ENCODE measurements at regions of chr2 and their contacts with region 1.

Region 1: GRCh38 chr2:203240491-203240890 is 1.7 kb downstream of the CYP20A1 start:
- DNase-seq: no peak
- H3K4me3 ChIP-seq: peak overlapping the region in 2 of 4 donors; percentile 71 to 79
- H3K27ac ChIP-seq: no peak overlapping the region
- H3K4me1 ChIP-seq: peaks cover 21 to 32% (median 24%) of the 10 kb centered on the region in 4 donors
- H3K27me3 ChIP-seq: no peaks in the 10 kb centered on the region
- CTCF ChIP-seq: no peak
- EP300 ChIP-seq: no peak
- POLR2A ChIP-seq: no peak

Region 2: GRCh38 chr2:203453858-203454451 is 213.5 kb after region 1 on chr2:
- intact Hi-C with region 1: loop called (anchors 10 kb)
- DNase-seq: no peak
- H3K4me3 ChIP-seq: no peak overlapping the region
- H3K27ac ChIP-seq: no peak overlapping the region
- H3K4me1 ChIP-seq: peaks cover 0 to 4% (median 0%) of the 10 kb centered on the region in 4 donors
- H3K27me3 ChIP-seq: no peaks in the 10 kb centered on the region
- CTCF ChIP-seq: peak; percentile 67 to 75 (median 70)
- EP300 ChIP-seq: no peak
- POLR2A ChIP-seq: no peak

Region 3: GRCh38 chr2:203498161-203498560 is 257.7 kb after region 1 on chr2:
- intact Hi-C with region 1: no loop called
- DNase-seq: no peak
- H3K4me3 ChIP-seq: no peak overlapping the region
- H3K27ac ChIP-seq: no peak overlapping the region
- H3K4me1 ChIP-seq: peaks cover 5 to 25% (median 14%) of the 10 kb centered on the region in 4 donors
- H3K27me3 ChIP-seq: no peaks in the 10 kb centered on the region
- CTCF ChIP-seq: no peak
- EP300 ChIP-seq: no peak
- POLR2A ChIP-seq: no peak

Measured in esophagus muscularis mucosa (tissue), 4 donors.